A673 (cell line): ENCODE measurements at regions of chr17 and their contacts with region 1.

Region 1: GRCh38 chr17:52170963-52171572 is 12.6 kb upstream of the CA10 start:
- DNase-seq: peak; percentile 37
- H3K4me3 ChIP-seq: no peak overlapping the region
- H3K27ac ChIP-seq: no peak overlapping the region
- H3K4me1 ChIP-seq: no peaks in the 10 kb centered on the region
- H3K27me3 ChIP-seq: no peaks in the 10 kb centered on the region
- CTCF ChIP-seq: peak; percentile 58

Region 2: DNA sequence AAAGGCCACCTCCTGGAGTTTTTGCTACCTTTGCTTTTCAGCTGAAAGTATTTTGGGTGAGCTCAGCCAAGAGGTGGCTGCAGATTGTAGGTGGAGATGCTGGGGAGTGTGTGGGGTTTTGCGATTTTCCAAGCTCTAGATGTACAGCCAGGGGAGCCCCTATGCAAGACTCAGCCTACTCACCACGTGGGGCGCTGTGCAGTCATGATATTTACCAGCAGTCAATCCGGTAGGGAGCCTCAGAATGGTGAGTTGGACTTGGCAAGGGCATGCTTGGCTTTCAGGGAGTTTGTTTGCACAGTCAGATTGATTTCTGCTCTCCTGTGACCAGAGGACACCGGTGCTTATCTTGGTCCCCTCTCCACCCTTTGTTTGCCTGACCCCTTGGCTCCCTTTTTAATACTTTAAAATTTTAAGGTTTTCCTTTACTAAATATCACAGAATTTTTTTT is 735.4 kb before region 1 on chr17:
- CTCF ChIA-PET with region 1: interaction called, 12 read pairs
- POLR2A ChIA-PET with region 1: no interaction called
- intact Hi-C with region 1: no loop called
- DNase-seq: peak; percentile 71
- H3K4me3 ChIP-seq: no peak overlapping the region
- H3K27ac ChIP-seq: no peak overlapping the region
- H3K4me1 ChIP-seq: no peaks in the 10 kb centered on the region
- H3K27me3 ChIP-seq: no peaks in the 10 kb centered on the region
- CTCF ChIP-seq: peak; percentile 73

Region 3: GRCh38 chr17:51948128-51948527 is 222.9 kb before region 1 on chr17:
- CTCF ChIA-PET with region 1: no interaction called
- POLR2A ChIA-PET with region 1: no interaction called
- intact Hi-C with region 1: no loop called
- DNase-seq: peak; percentile 0
- H3K4me3 ChIP-seq: no peak overlapping the region
- H3K27ac ChIP-seq: no peak overlapping the region
- H3K4me1 ChIP-seq: no peaks in the 10 kb centered on the region
- H3K27me3 ChIP-seq: no peaks in the 10 kb centered on the region
- CTCF ChIP-seq: no peak